ENCODE measurements at regions of chr15 and their contacts with region 1.

Region 1: DNA sequence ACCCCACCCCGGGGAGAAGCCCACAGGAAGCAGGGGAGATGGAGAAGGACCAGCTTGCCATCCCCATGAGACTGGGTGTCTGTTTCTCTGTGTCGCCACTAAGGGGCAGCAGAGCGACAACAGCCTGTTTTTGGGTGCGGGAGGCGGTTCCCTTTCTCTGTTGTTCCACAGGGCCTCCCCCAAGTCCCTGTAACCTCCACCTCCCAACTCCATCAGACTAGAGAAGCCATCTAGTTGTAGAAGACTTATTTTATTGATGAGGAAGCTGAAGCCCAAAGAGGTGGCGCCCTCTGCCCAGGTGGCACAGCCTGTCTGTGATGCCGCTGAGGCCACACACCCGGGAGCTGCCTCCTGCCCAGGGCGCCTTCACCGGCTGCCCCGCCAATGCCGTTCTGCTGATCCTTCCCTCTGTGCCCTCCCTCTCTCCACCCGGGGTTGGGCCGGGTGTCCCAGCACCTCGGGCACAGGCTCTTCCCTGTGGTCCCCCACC is 3.9 kb upstream of the CCDC9B start:
- DNase-seq: peak; percentile 91
- H3K4me3 Mint-ChIP-seq: no peak overlapping the region
- H3K27ac Mint-ChIP-seq: no peak overlapping the region
- H3K4me1 Mint-ChIP-seq: peaks cover 2% of the 10 kb centered on the region
- H3K27me3 Mint-ChIP-seq: no peaks in the 10 kb centered on the region

Region 2: GRCh38 chr15:40115670-40116093 is 229.0 kb before region 1 on chr15:
- intact Hi-C with region 1: no loop called
- DNase-seq: peak; percentile 88
- H3K4me3 Mint-ChIP-seq: peak overlapping the region; percentile 39
- H3K27ac Mint-ChIP-seq: peak overlapping the region; percentile 74
- H3K4me1 Mint-ChIP-seq: peaks cover 24% of the 10 kb centered on the region
- H3K27me3 Mint-ChIP-seq: peaks cover 10% of the 10 kb centered on the region

Region 3: GRCh38 chr15:40323239-40323952 is 21.3 kb before region 1 on chr15 and contains the start of gene INAFM2:
- intact Hi-C with region 1: no loop called
- DNase-seq: peak; percentile 97
- H3K4me3 Mint-ChIP-seq: peak within 1 kb of the TSS; percentile 82
- H3K27ac Mint-ChIP-seq: no peak within 1 kb of the TSS
- H3K4me1 Mint-ChIP-seq: peaks cover 31% of the 10 kb centered on the region
- H3K27me3 Mint-ChIP-seq: peaks cover 16% of the 10 kb centered on the region
- total RNA-seq, gene INAFM2: 22.8 and 23.3 TPM in 2 replicates

Region 4: GRCh38 chr15:40357723-40358470 is 13.2 kb after region 1 on chr15 and contains the start of gene DISP2:
- intact Hi-C with region 1: loop called (anchors 1 kb)
- DNase-seq: peak; percentile 97
- H3K4me3 Mint-ChIP-seq: peak within 1 kb of the TSS; percentile 82
- H3K27ac Mint-ChIP-seq: peak within 1 kb of the TSS; percentile 45
- H3K4me1 Mint-ChIP-seq: peaks cover 21% of the 10 kb centered on the region
- H3K27me3 Mint-ChIP-seq: peaks cover 34% of the 10 kb centered on the region
- total RNA-seq, gene DISP2: 0.02 and 0.05 TPM in 2 replicates

Region 5: DNA sequence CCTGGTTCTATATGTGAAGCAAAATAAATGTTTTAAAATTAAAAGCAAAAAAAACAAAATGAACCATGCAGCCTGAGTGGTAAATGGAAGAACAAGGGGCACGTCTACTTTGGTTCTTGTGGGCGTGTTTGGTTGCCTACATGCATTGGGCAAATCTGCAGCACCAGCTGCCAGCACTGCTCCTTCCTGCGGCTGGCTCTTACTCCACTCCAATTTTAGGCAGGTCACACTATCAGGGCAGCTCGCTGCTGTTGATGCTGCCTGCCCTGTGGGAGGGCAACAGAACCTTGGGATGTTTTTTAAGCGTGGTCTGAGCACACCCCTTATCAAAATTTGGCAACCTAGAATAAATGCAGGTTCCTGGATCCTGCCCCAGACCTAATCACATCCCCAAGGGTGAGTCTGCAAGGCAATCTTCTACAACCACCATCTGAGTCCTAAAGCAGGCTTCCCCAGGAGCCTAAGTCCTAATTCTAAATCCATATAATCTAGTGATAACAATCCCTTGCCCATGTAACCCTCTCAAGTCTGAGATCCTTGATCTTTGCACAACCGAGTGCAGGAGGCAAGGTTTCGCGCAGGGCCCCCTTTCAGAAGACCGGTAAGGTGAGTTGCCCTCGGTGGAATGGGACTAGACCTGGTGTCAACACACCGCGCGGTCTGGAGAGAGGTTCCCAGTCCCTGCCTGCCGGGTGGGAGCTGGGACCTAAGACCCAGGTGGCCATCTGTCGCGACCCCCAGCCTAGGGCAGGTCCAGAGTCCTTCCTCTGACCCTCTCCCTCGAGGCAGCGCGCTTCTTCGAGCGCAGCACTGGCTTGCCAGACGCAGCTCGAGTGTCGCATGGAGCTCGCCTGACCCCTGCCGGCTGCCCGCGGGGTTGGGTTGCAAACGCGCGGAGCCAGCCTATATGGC is 76.8 kb after region 1 on chr15:
- intact Hi-C with region 1: loop called (anchors 1 kb)
- DNase-seq: peak; percentile 96
- H3K4me3 Mint-ChIP-seq: no peak overlapping the region
- H3K27ac Mint-ChIP-seq: no peak overlapping the region
- H3K4me1 Mint-ChIP-seq: no peaks in the 10 kb centered on the region
- H3K27me3 Mint-ChIP-seq: no peaks in the 10 kb centered on the region